ENCODE measurements at regions of chr21 and their contacts with region 1.

Region 1: DNA sequence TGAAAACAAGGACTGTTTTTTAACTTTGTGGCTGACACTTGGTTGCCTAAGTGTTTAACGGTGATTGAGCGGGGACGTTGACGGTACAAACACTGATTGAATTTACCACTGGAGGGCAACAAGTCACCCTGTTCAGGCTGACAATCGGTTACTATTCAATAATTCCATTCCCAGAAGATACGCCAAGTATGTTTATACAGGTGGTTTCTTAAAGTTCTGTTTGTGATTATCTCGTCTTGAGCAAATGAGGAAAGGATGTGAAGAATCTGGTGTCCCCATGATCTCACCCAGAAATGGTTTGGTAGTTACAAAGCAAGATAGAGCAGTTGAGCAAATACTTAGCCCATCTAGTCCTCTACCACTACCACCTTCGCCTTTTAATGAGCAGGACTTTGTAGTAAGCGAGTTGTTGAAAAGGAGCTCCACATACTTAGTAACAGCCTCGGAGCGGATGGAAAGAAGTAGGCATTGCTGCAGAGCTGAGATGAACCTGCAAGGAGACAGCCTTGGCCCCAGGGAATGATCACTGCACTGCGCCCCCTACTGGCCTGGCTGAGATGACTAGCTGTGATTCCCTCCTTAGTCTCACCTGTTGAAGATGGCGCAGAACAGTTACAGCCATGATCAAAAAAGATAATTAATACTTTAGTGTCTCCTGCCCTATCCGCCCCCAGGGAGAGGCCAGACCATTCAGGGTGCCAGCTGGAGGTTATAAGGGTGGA is 36.3 kb downstream of the IFNAR1 start:
- DNase-seq: peak in 9 of 10 donors; percentile 52 to 79 (median 73)
- H3K4me3 ChIP-seq: peak overlapping the region in 37 of 59 donors; percentile 1 to 53 (median 31)
- H3K27ac ChIP-seq: peak overlapping the region in 55 of 59 donors; percentile 3 to 77 (median 55)
- H3K27me3 ChIP-seq: no peaks in the 10 kb centered on the region
- CTCF ChIP-seq: peak; percentile 59 to 86 (median 78)

Region 2: GRCh38 chr21:33244082-33244778 is 116.8 kb before region 1 on chr21:
- intact Hi-C with region 1: no loop called
- DNase-seq: no peak
- H3K4me3 ChIP-seq: no peak overlapping the region
- H3K27ac ChIP-seq: peak overlapping the region in 3 of 59 donors; percentile 4 to 40 (median 9)
- H3K27me3 ChIP-seq: no peaks in the 10 kb centered on the region
- CTCF ChIP-seq: no peak

Region 3: DNA sequence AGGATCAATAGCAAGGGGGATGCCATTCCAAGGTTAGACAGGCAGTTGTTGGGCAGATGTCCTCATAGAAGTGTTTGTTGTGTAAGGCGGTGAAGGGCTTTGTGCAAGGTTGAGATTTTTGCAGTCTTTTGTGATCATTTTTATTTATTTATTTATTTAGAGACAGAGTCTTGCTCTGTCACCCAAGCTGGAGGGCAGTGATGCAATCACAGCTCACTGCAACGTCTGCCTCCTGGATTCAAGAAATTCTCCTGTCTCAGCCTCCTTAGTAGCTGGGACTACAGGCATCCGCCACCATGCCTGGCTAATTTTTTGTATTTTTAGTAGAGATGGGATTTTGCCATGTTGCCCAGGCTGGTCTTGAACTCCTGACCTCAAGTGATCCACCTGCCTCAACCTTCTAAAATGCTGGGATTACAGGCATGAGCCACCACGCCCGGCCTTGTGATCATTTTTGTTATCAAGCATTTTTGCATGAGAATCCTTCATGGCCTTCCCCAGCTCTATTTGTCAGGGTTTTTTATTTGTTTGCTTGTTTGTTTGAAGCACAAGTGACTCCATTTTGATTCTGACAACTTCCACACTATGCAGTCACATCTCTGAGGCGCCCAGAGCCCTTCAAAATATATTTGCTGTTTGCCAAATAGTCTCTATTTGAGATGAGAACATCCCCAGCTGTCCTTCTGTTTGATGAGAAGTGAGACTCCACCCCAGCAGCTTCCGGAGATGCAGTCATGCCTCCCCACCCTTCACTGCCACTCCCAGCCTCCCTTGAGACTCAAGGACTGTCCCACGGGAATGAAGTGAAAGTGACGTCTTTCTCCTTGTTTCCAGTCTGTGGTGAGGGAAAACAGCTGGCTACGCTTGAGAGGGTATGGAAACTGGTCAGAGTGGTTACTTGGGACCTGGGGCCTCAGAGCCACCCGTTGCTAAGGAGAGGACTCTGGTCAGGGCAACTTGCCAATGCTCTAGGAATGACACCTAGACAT is 80.7 kb after region 1 on chr21:
- intact Hi-C with region 1: loop called (anchors 5 to 10 kb)
- DNase-seq: no peak
- H3K4me3 ChIP-seq: no peak overlapping the region
- H3K27ac ChIP-seq: peak overlapping the region in 22 of 59 donors; percentile 2 to 61 (median 28)
- H3K27me3 ChIP-seq: no peaks in the 10 kb centered on the region
- CTCF ChIP-seq: no peak

Region 4: GRCh38 chr21:33552093-33552998 is 191.3 kb after region 1 on chr21:
- intact Hi-C with region 1: no loop called
- DNase-seq: no peak
- H3K4me3 ChIP-seq: no peak overlapping the region
- H3K27ac ChIP-seq: no peak overlapping the region
- H3K27me3 ChIP-seq: no peaks in the 10 kb centered on the region
- CTCF ChIP-seq: no peak